HEK293T (cell line): ENCODE measurements at regions of chr5 and their contacts with region 1.

Region 1: DNA sequence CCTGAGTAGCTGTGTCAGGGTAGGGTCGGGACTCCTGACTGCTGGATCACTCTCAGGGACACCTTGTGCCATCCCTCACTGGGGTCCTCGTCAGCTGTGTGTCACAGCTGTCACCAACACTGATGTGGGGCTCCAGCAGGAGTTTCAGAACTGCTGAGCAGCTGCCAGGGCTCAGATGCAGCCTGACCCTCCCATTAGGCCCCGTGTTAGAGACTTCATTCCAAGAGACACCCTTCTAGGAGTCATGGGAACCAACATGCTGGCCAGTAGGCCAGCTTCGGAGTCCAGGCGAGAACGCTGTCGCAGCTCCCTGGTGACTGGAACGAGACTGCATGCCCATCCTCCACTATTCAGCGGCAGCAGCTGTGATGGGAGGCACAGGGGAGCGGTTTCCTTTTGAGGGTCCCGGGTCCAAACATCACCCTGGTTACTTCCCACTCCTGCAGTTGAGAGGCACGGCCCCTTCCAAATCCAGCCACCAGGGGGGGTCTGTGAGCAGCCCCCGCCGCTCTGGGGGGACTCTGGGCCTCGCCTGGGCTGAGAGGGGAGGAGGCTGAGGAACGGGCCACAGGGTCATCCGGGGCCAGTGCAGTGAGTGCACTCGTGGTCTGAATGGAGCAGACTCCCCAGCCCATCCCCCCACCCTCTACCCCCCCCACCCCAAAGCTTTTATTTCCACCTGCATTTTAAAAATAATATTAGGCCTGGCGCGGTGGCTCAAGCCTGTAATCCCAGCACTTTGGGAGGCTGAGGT is 12.6 kb upstream of the TCF7 start:
- DNase-seq: peak; percentile 75

Region 2: GRCh38 chr5:134113902-134114875 is 12.3 kb after region 1 on chr5 and contains the start of gene TCF7:
- CTCF ChIA-PET with region 1: interaction called, 17 read pairs
- POLR2A ChIA-PET with region 1: interaction called, 3 read pairs
- DNase-seq: peak; percentile 91

Region 3: GRCh38 chr5:134140530-134141201 is 38.8 kb after region 1 on chr5:
- CTCF ChIA-PET with region 1: interaction called, 15 read pairs
- POLR2A ChIA-PET with region 1: no interaction called
- DNase-seq: peak; percentile 58

Region 4: DNA sequence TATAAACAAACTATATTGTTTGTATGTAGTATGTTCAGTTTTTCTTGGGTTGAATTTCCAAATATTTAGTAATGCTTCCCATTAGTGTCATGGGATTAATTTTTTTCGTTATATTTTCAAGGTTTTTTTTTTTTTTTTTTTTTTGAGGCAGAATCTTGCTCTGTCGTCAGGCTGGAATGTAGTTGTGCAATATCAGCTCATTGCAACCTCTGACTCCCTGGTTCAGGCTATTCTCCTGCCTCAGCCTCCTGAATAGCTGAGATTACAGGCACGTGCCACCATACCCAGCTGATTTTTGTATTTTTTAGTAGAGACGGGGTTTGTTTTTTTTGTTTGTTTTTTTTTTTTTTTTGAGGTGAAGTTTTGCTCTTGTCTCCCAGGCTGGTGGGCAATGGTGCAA is 667.3 kb after region 1 on chr5:
- CTCF ChIA-PET with region 1: no interaction called
- POLR2A ChIA-PET with region 1: no interaction called
- DNase-seq: no peak